ENCODE measurements at regions of chr16 and their contacts with region 1.

Region 1: GRCh38 chr16:85735225-85735635 is 15.7 kb downstream of the C16orf74 start:
- DNase-seq: peak in 7 of 9 donors; percentile 47 to 75 (median 66)
- ATAC-seq: peak; percentile 76
- H3K4me3 ChIP-seq: peak overlapping the region; percentile 61
- H3K4me3 Mint-ChIP-seq: peak overlapping the region; percentile 30 to 86 (median 83)
- H3K27ac ChIP-seq: peak overlapping the region; percentile 58
- H3K27ac Mint-ChIP-seq: peak overlapping the region; percentile 49 to 92 (median 86)
- H3K4me1 ChIP-seq: peaks cover 15 to 27% of the 10 kb centered on the region in 2 donors
- H3K4me1 Mint-ChIP-seq: peaks cover 9 to 40% (median 31%) of the 10 kb centered on the region in 7 donors
- H3K27me3 ChIP-seq: no peaks in the 10 kb centered on the region
- H3K27me3 Mint-ChIP-seq: no peaks in the 10 kb centered on the region

Region 2: GRCh38 chr16:85262558-85263238 is 472.5 kb before region 1 on chr16:
- CTCF ChIA-PET with region 1: no interaction called
- POLR2A ChIA-PET with region 1: no interaction called
- intact Hi-C with region 1: no loop called
- DNase-seq: no peak
- ATAC-seq: no peak
- H3K4me3 ChIP-seq: no peak overlapping the region
- H3K4me3 Mint-ChIP-seq: peak overlapping the region in 1 of 10 donors; percentile 3
- H3K27ac ChIP-seq: no peak overlapping the region
- H3K27ac Mint-ChIP-seq: peak overlapping the region in 1 of 9 donors; percentile 9
- H3K4me1 ChIP-seq: no peaks in the 10 kb centered on the region
- H3K4me1 Mint-ChIP-seq: peaks cover 0 to 7% (median 3%) of the 10 kb centered on the region in 7 donors
- H3K27me3 ChIP-seq: no peaks in the 10 kb centered on the region
- H3K27me3 Mint-ChIP-seq: peaks cover 0 to 21% (median 10%) of the 10 kb centered on the region in 5 donors

Region 3: GRCh38 chr16:85688586-85689284 is 46.5 kb before region 1 on chr16 and contains the start of gene GINS2:
- CTCF ChIA-PET with region 1: no interaction called
- POLR2A ChIA-PET with region 1: no interaction called
- intact Hi-C with region 1: loop called in 1 of 2 experiments (anchors 1 kb)
- DNase-seq: peak; percentile 77 to 90 (median 89)
- ATAC-seq: peak; percentile 100
- H3K4me3 ChIP-seq: peak within 1 kb of the TSS; percentile 69
- H3K4me3 Mint-ChIP-seq: peak within 1 kb of the TSS; percentile 64 to 85 (median 76)
- H3K27ac ChIP-seq: peak within 1 kb of the TSS; percentile 51
- H3K27ac Mint-ChIP-seq: peak within 1 kb of the TSS in 3 of 9 donors; percentile 46 to 63 (median 56)
- H3K4me1 ChIP-seq: peaks cover 5% of the 10 kb centered on the region in 2 donors
- H3K4me1 Mint-ChIP-seq: peaks cover under 1 to 21% (median 7%) of the 10 kb centered on the region in 7 donors
- H3K27me3 ChIP-seq: no peaks in the 10 kb centered on the region
- H3K27me3 Mint-ChIP-seq: peaks cover 0 to 8% (median 6%) of the 10 kb centered on the region in 5 donors
- total RNA-seq, gene GINS2: 1.0 to 43.6 (median 1.9) TPM

Region 4: DNA sequence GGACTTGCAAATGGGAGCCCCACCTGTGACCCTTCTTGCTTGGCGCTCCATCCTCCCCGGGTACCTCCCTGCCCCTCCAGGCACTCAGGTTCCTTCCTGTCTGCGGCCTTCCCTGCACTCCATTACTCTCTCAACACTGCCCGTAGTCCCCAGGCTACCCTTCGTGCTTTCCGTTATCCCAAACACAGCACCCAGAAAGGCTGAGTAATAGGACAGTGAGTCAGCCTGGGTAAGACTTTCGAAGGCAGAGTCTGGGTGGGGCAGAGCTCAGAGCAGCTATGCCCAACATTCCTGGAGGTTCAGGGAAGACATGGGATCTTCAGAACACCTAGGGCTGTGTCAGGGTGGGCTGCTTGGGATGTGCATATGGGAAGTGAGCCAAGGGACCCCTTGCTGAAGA is 32.3 kb after region 1 on chr16:
- CTCF ChIA-PET with region 1: no interaction called
- POLR2A ChIA-PET with region 1: no interaction called
- intact Hi-C with region 1: no loop called
- DNase-seq: no peak
- ATAC-seq: no peak
- H3K4me3 ChIP-seq: no peak overlapping the region
- H3K4me3 Mint-ChIP-seq: no peak overlapping the region
- H3K27ac ChIP-seq: no peak overlapping the region
- H3K27ac Mint-ChIP-seq: peak overlapping the region in 2 of 9 donors; percentile 21 to 60
- H3K4me1 ChIP-seq: no peaks in the 10 kb centered on the region
- H3K4me1 Mint-ChIP-seq: no peaks in the 10 kb centered on the region
- H3K27me3 ChIP-seq: no peaks in the 10 kb centered on the region
- H3K27me3 Mint-ChIP-seq: no peaks in the 10 kb centered on the region